HepG2 (cell line): ENCODE measurements at regions of chr6 and their contacts with region 1.

Region 1: GRCh38 chr6:3356056-3356761 is 97.5 kb downstream of the PSMG4 start:
- DNase-seq: peak; percentile 65
- ATAC-seq: peak; percentile 56
- H3K4me3 ChIP-seq: peak overlapping the region; percentile 12 to 47 (median 17); a peak in 5 of 6 replicates
- H3K27ac ChIP-seq: peak overlapping the region; percentile 98
- H3K4me1 ChIP-seq: peaks cover 89% of the 10 kb centered on the region
- H3K27me3 ChIP-seq: no peaks in the 10 kb centered on the region
- CTCF ChIP-seq: no peak
- EP300 ChIP-seq: no peak
- POLR2A ChIP-seq: peak in 1 of 2 experiments; percentile 42; a peak in 1 of 4 replicates
- RAD21 ChIP-seq: no peak

Region 2: DNA sequence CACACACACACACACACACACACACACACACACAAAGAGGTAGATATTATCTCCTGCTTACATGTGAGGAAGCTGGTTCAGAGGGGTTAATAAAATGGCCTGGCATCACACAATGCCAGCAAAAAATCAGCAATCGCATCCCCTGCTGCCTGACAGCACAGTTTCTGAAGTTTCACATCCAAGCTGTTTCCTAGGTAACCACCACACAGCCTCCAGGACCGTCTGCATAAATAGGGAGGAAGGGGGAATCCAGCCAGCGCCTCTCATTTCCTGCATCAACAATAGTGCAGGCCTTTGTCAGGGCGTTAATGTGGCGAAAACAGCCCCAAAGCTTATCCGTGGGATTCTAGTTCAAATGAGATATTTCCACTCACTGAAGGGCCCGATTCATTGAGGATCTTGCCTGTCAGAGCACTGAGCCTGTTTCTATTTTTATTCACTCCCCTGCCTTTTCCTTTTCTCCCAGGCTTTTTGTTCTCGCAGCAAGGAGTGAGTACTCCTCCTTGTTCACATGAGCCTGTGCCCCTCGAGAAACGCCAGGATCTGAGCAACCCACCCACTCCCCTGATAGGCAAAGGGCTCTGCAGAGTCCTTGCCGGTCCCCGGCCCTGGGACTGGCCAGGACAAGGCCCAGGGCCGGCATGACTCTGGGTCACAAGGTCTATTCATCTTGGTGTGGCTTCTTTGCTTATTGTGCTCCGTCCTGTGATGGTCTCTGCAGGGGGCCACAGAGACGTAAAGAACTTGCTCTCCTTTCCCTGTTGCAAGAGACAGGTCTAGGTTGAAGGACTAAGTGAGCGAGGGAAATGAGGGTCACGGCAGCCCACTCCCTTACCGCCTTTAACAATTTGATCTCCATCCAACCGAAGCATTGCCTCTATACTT is 161.4 kb before region 1 on chr6:
- CTCF ChIA-PET with region 1: no interaction called
- POLR2A ChIA-PET with region 1: no interaction called
- in situ Hi-C with region 1: no loop called
- intact Hi-C with region 1: no loop called
- DNase-seq: no peak
- ATAC-seq: peak; percentile 75
- H3K4me3 ChIP-seq: peak overlapping the region; percentile 46 to 67 (median 59)
- H3K27ac ChIP-seq: peak overlapping the region; percentile 66
- H3K4me1 ChIP-seq: peaks cover 39% of the 10 kb centered on the region
- H3K27me3 ChIP-seq: peaks cover 0 to 4% of the 10 kb centered on the region in 2 experiments; a peak in 1 of 5 replicates
- CTCF ChIP-seq: no peak
- EP300 ChIP-seq: no peak
- POLR2A ChIP-seq: 0 out of 4 replicates have a peak, but pooled peaks of 1 of the 2 experiments have one; percentile 13
- RAD21 ChIP-seq: no peak

Region 3: DNA sequence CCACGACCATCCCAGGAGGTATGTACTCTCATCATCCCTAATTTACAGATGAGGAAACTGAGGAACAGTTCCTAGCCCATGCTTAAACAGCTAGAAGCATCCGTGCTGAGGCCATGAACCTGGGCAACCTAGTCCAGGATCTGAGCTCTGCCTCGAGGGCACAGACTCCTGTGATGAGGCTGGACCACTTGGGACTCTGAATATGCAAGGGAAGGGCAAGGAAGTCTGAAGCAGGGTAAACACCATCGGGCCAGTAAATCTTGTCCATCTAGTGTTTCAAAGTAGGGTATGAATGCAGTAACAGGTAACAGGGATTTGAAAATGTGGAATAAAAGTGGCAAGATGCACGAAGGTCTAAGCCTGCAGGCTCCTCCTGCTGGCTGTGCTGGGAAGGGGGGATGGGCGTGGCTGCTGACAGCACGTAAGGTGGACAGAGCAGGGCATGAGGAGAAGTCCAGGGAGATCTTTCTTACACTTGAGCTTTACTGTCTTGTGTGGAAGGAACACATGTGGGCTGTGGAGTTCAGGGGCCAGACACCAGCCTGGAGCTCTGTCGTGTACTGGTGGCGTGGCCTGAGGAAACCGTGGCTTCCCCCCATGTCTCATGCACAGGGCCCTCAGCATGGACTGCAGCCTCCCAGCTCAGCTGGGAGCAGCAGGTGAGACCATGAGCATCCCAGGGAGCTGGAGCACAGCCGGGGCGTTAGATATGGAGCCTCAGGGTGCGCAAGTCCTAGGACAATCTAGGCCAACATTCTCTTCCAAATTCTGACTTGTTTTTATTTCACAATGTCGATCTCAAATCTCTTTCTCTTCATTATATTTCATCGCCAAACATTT is 16.0 kb after region 1 on chr6:
- CTCF ChIA-PET with region 1: no interaction called
- POLR2A ChIA-PET with region 1: interaction called, 101 read pairs
- in situ Hi-C with region 1: no loop called
- intact Hi-C with region 1: no loop called
- DNase-seq: no peak
- ATAC-seq: no peak
- H3K4me3 ChIP-seq: no peak overlapping the region
- H3K27ac ChIP-seq: peak overlapping the region; percentile 85
- H3K4me1 ChIP-seq: peaks cover 100% of the 10 kb centered on the region
- H3K27me3 ChIP-seq: no peaks in the 10 kb centered on the region
- CTCF ChIP-seq: peak; percentile 56
- EP300 ChIP-seq: no peak
- POLR2A ChIP-seq: no peak
- RAD21 ChIP-seq: peak; percentile 19; the same call in 1 of the 2 replicates

Region 4: GRCh38 chr6:3377536-3378397 is 21.6 kb after region 1 on chr6:
- CTCF ChIA-PET with region 1: no interaction called
- POLR2A ChIA-PET with region 1: interaction called, 101 read pairs
- in situ Hi-C with region 1: no loop called
- intact Hi-C with region 1: loop called (anchors 1 kb)
- DNase-seq: peak; percentile 79
- ATAC-seq: peak; percentile 11
- H3K4me3 ChIP-seq: no peak overlapping the region; a peak in 1 of 6 replicates
- H3K27ac ChIP-seq: peak overlapping the region; percentile 87
- H3K4me1 ChIP-seq: peaks cover 100% of the 10 kb centered on the region
- H3K27me3 ChIP-seq: no peaks in the 10 kb centered on the region
- CTCF ChIP-seq: no peak; the same call in 1 of the 2 replicates
- EP300 ChIP-seq: peak in 1 of 2 experiments; percentile 80; a peak in 2 of 4 replicates
- POLR2A ChIP-seq: 0 out of 4 replicates have a peak, but pooled peaks of 1 of the 2 experiments have one; percentile 2
- RAD21 ChIP-seq: no peak; the same call in 1 of the 2 replicates